Colonic mucosa (tissue), 4 donors: ENCODE measurements at regions of chr9 and their contacts with region 1.

Region 1: DNA sequence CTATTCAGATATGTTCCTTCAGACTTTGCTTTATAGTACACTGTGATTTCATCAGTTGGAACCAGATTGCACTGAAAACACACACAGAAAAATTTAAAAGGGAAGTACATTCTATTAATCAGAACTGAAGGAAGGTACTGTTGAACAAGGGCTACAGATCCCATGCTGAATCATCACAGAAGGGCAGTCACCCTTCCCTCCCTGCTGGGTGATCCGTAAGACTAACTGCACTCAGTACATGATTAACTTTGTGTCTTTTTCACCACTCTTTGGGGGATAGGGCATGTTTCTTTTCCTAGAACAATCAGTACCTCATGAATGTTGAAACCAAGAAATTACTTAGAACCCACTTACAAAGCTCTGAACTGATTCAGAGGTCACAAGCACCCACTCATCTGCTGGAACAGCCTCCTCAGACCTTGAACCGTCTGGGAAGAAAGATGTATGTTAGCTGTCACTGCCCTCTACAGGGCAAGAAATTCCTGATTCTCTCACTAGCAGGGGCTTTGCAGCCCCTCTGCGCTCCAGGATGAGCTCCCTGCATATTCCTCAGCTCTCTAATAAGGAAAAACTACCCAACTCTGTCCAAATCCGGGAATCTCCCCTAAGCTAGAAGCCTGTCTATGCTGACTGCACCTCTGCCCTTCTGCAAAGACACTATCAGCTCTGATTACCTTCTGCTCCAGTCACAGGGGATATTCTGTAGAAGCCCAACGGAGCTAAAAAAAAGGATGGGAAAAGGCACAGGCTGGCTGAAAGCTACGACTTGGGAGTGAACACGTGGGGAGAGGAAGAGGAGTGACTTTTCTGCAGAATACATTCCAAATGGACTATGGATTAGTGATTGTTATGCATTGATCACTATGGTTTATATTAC is 51.0 kb downstream of the IARS1 start:
- DNase-seq: no peak
- H3K4me3 ChIP-seq: no peak overlapping the region
- H3K27ac ChIP-seq: no peak overlapping the region
- H3K4me1 ChIP-seq: no peaks in the 10 kb centered on the region
- H3K27me3 ChIP-seq: no peaks in the 10 kb centered on the region
- CTCF ChIP-seq: no peak

Region 2: GRCh38 chr9:92133949-92134604 is 108.4 kb before region 1 on chr9:
- intact Hi-C with region 1: loop called (anchors 10 kb)
- DNase-seq: peak; percentile 74
- H3K4me3 ChIP-seq: no peak overlapping the region
- H3K27ac ChIP-seq: no peak overlapping the region
- H3K4me1 ChIP-seq: no peaks in the 10 kb centered on the region
- H3K27me3 ChIP-seq: no peaks in the 10 kb centered on the region
- CTCF ChIP-seq: peak; percentile 94

Region 3: DNA sequence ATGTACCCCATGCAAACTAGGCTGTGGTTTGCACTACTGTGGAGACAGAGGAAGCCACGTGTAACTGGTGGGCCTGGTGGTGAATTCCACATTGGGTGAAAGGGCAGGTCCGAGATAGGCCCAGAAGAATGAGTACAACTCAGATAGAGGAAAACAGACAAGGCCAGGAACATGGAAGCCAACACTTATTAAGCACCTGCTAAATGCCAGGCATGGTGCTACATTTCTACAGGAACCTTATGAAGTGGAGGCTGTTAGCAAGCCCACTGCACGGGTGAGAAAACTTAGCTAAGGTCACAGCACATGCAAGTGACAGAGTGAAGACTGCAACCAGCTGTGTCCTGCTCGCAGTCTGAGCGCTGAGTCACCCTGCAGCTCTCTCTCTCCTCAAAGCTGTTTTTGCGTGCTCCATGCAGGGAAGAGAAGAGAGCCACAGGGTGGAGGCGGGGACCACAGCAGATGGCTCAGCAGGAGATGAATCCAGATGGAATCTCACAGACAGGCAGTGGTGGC is 61.8 kb before region 1 on chr9:
- intact Hi-C with region 1: no loop called
- DNase-seq: no peak
- H3K4me3 ChIP-seq: no peak overlapping the region
- H3K27ac ChIP-seq: no peak overlapping the region
- H3K4me1 ChIP-seq: no peaks in the 10 kb centered on the region
- H3K27me3 ChIP-seq: no peaks in the 10 kb centered on the region
- CTCF ChIP-seq: no peak

Region 4: GRCh38 chr9:92308893-92309292 is 66.4 kb after region 1 on chr9:
- intact Hi-C with region 1: loop called (anchors 10 kb)
- DNase-seq: no peak
- H3K4me3 ChIP-seq: no peak overlapping the region
- H3K27ac ChIP-seq: no peak overlapping the region
- H3K4me1 ChIP-seq: no peaks in the 10 kb centered on the region
- H3K27me3 ChIP-seq: no peaks in the 10 kb centered on the region
- CTCF ChIP-seq: no peak